CD4-positive, alpha-beta memory T cell (primary cell): ENCODE measurements at regions of chr19 and their contacts with region 1.

Region 1: DNA sequence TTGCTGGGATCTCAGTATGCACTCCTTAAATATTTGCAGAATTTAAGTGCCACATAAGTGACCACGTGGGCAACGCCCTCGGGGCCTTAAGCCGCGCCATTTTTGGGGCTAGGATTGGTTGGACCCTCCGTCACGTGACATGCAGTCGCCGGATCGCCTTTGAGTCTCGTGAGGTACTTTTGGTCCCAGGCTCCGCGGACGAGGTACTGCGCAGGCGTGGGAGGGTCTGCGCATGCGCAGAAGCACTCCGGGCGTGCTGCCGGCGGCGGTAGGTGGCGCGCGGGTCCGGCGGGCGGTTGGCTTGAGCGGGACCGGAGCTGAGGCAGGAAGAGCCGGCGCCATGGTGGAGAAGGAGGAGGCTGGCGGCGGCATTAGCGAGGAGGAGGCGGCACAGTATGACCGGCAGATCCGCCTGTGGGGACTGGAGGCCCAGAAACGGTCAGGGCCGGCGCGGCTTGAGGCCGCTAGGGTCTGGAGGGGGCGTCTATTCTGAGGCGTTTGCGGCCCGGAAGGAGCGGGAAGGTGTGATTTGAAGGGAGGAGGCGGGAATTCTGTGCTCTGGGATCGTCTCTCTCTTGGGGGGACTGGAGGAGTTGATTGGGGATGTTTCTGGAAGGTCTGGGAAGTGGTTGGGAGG is at the start of gene SAE1:
- DNase-seq: peak; percentile 88 to 91 (median 90)
- H3K4me3 ChIP-seq: peak within 1 kb of the TSS; percentile 82 to 89
- H3K4me3 Mint-ChIP-seq: peak within 1 kb of the TSS; percentile 97 to 100 (median 100)
- H3K27ac ChIP-seq: peak within 1 kb of the TSS; percentile 73
- H3K27ac Mint-ChIP-seq: peak within 1 kb of the TSS; percentile 93 to 99 (median 98)
- H3K4me1 ChIP-seq: peaks cover 43% of the 10 kb centered on the region
- H3K4me1 Mint-ChIP-seq: peaks cover 33 to 55% (median 44%) of the 10 kb centered on the region in 4 donors
- H3K27me3 ChIP-seq: no peaks in the 10 kb centered on the region
- H3K27me3 Mint-ChIP-seq: no peaks in the 10 kb centered on the region
- total RNA-seq, gene SAE1: 35.3 to 36.0 TPM

Region 2: GRCh38 chr19:47035127-47036096 is 95.3 kb before region 1 on chr19:
- CTCF ChIA-PET with region 1: interaction called, 18 read pairs
- POLR2A ChIA-PET with region 1: interaction called, 3 read pairs
- intact Hi-C with region 1: loop called (anchors 1 kb)
- DNase-seq: peak; percentile 93 to 98 (median 94)
- H3K4me3 ChIP-seq: peak overlapping the region; percentile 36 to 44
- H3K4me3 Mint-ChIP-seq: peak overlapping the region; percentile 84 to 98 (median 88)
- H3K27ac ChIP-seq: no peak overlapping the region
- H3K27ac Mint-ChIP-seq: peak overlapping the region; percentile 73 to 90 (median 87)
- H3K4me1 ChIP-seq: peaks cover 23% of the 10 kb centered on the region
- H3K4me1 Mint-ChIP-seq: peaks cover 11 to 32% (median 21%) of the 10 kb centered on the region in 4 donors
- H3K27me3 ChIP-seq: no peaks in the 10 kb centered on the region
- H3K27me3 Mint-ChIP-seq: peaks cover 5 to 19% of the 10 kb centered on the region in 2 donors

Region 3: DNA sequence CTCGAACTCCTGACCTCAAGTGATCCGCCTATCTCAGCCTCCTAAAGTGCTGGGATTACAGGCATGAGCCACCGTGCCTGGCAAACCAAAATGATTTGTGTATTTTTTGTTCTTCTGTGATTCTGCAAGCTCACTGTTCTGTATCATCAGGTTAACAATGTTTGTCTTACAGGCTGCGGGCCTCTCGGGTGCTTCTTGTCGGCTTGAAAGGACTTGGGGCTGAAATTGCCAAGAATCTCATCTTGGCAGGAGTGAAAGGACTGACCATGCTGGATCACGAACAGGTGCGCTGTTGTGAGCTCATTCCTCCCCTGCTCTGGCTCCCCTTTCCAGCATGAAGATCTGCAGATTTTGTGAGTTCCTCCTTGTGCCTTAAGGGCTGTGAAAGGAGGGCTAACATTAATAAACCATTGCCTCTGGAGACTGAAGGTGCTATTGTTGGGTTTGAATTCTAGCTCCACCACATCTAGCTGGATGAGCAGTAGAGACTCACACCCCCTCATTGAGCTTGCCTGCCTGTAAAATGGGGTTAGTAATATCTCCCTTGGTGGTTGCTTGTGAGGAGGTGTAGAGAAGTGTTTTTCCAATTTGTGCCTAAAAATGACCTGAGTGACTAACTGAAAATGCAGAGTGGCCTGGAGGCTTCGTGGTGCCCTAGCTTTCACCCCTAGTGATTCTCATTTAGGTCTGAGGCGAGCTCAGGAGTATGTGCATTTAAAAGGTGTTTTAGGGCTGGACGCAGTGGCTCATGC is 12.8 kb after region 1 on chr19:
- CTCF ChIA-PET with region 1: interaction called, 19 read pairs
- POLR2A ChIA-PET with region 1: interaction called, 22 read pairs
- intact Hi-C with region 1: loop called (anchors 2 kb)
- DNase-seq: no peak
- H3K4me3 ChIP-seq: no peak overlapping the region
- H3K4me3 Mint-ChIP-seq: no peak overlapping the region
- H3K27ac ChIP-seq: no peak overlapping the region
- H3K27ac Mint-ChIP-seq: peak overlapping the region; percentile 30 to 87 (median 41)
- H3K4me1 ChIP-seq: peaks cover 37% of the 10 kb centered on the region
- H3K4me1 Mint-ChIP-seq: peaks cover 34 to 68% (median 48%) of the 10 kb centered on the region in 4 donors
- H3K27me3 ChIP-seq: no peaks in the 10 kb centered on the region
- H3K27me3 Mint-ChIP-seq: no peaks in the 10 kb centered on the region

Region 4: DNA sequence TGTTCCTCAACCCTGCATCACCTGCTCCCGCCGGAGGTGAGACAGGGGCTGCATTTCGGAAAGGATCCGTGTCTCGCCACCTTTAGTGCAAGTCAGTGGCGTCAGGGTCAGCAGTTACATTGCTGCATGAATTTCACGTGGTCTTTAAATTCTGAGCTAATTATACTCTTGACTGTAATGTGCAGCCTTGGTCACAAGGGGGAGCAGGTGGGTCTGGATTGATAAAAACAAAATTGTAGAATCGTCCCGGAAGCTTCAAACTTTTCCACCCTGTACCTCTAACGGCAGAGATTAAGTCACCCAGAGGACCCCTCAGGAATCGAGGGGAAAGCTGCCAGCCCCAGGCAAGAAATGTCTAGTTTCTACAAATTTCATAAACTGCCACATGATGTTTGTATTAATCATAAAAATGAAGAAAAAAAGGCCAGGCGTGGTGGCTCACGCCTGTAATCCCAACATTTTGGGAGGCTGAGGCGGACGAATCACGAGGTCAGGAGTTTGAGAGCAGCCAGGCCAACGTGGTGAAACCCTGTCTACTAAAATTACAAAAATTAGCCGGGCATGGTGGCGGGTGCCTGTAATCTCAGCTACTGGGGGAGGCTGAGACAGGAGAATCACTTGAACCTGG is 80.1 kb after region 1 on chr19:
- CTCF ChIA-PET with region 1: interaction called, 27 read pairs
- POLR2A ChIA-PET with region 1: interaction called, 4 read pairs
- intact Hi-C with region 1: no loop called
- DNase-seq: peak; percentile 68 to 83 (median 75)
- H3K4me3 ChIP-seq: no peak overlapping the region
- H3K4me3 Mint-ChIP-seq: peak overlapping the region in 2 of 8 donors; percentile 4 to 48
- H3K27ac ChIP-seq: no peak overlapping the region
- H3K27ac Mint-ChIP-seq: peak overlapping the region; percentile 15 to 89 (median 43)
- H3K4me1 ChIP-seq: peaks cover 12% of the 10 kb centered on the region
- H3K4me1 Mint-ChIP-seq: peaks cover 6 to 15% (median 7%) of the 10 kb centered on the region in 4 donors
- H3K27me3 ChIP-seq: no peaks in the 10 kb centered on the region
- H3K27me3 Mint-ChIP-seq: no peaks in the 10 kb centered on the region

Region 5: GRCh38 chr19:47256688-47257443 is 126.2 kb after region 1 on chr19:
- CTCF ChIA-PET with region 1: interaction called, 4 read pairs
- POLR2A ChIA-PET with region 1: interaction called, 12 read pairs
- intact Hi-C with region 1: no loop called
- DNase-seq: peak; percentile 97 to 99 (median 98)
- H3K4me3 ChIP-seq: peak overlapping the region; percentile 61 to 62
- H3K4me3 Mint-ChIP-seq: peak overlapping the region; percentile 88 to 98 (median 94)
- H3K27ac ChIP-seq: peak overlapping the region; percentile 76
- H3K27ac Mint-ChIP-seq: peak overlapping the region; percentile 94 to 99 (median 99)
- H3K4me1 ChIP-seq: peaks cover 18% of the 10 kb centered on the region
- H3K4me1 Mint-ChIP-seq: peaks cover 20 to 44% (median 31%) of the 10 kb centered on the region in 4 donors
- H3K27me3 ChIP-seq: no peaks in the 10 kb centered on the region
- H3K27me3 Mint-ChIP-seq: no peaks in the 10 kb centered on the region